ENCODE measurements at regions of chr14 and their contacts with region 1.

Region 1: GRCh38 chr14:22570132-22570949 is 18.7 kb downstream of the DAD1 start:
- DNase-seq: peak; percentile 94
- ATAC-seq: peak; percentile 85
- H3K4me3 Mint-ChIP-seq: peak overlapping the region; percentile 81
- H3K27ac Mint-ChIP-seq: peak overlapping the region; percentile 95
- H3K4me1 Mint-ChIP-seq: peaks cover 67% of the 10 kb centered on the region
- H3K27me3 Mint-ChIP-seq: no peaks in the 10 kb centered on the region

Region 2: DNA sequence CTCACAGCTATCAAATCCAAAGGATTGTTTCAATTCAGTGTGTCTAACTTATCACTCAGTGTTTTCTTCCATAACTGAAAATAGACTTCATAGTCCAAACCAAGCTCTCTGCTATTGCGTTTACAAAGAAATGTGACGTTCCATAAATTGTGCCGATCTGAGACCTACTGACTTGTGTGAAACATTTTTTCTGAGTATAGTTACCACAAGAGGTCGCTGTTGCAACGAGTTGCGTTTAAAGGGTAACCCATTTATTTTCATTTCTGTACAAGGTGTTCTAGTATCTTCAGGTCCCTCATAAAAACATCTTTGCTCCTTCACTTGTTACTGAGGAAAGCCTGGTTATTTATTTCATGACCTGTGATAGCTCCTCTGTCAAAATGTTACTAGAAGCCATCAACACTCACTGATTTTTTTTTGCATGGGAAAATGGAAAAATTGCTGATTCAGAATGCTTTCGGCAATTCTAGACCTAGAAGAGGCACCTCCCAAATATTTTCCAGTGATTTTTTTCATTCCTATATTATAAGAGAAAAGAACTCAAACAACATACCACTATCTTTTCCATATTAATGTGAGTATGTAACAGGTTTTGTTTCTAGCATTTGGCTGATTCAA is 835.8 kb before region 1 on chr14:
- CTCF ChIA-PET with region 1: interaction called, 14 read pairs
- DNase-seq: peak; percentile 59
- ATAC-seq: peak; percentile 53
- H3K4me3 Mint-ChIP-seq: peak overlapping the region; percentile 64
- H3K27ac Mint-ChIP-seq: peak overlapping the region; percentile 64
- H3K4me1 Mint-ChIP-seq: peaks cover 10% of the 10 kb centered on the region
- H3K27me3 Mint-ChIP-seq: peaks cover 60% of the 10 kb centered on the region

Region 3: GRCh38 chr14:21990116-21990515 is 580.2 kb before region 1 on chr14:
- CTCF ChIA-PET with region 1: interaction called, 16 read pairs
- DNase-seq: no peak
- ATAC-seq: peak; percentile 32
- H3K4me3 Mint-ChIP-seq: peak overlapping the region; percentile 58
- H3K27ac Mint-ChIP-seq: peak overlapping the region; percentile 65
- H3K4me1 Mint-ChIP-seq: peaks cover 34% of the 10 kb centered on the region
- H3K27me3 Mint-ChIP-seq: peaks cover 4% of the 10 kb centered on the region

Region 4: GRCh38 chr14:22412926-22413411 is 157.4 kb before region 1 on chr14:
- CTCF ChIA-PET with region 1: no interaction called
- DNase-seq: no peak
- ATAC-seq: no peak
- H3K4me3 Mint-ChIP-seq: no peak overlapping the region
- H3K27ac Mint-ChIP-seq: no peak overlapping the region
- H3K4me1 Mint-ChIP-seq: no peaks in the 10 kb centered on the region
- H3K27me3 Mint-ChIP-seq: no peaks in the 10 kb centered on the region

Region 5: GRCh38 chr14:22531451-22532344 is 38.6 kb before region 1 on chr14:
- CTCF ChIA-PET with region 1: interaction called, 17 read pairs
- DNase-seq: peak; percentile 62
- ATAC-seq: peak; percentile 50
- H3K4me3 Mint-ChIP-seq: peak overlapping the region; percentile 73
- H3K27ac Mint-ChIP-seq: peak overlapping the region; percentile 91
- H3K4me1 Mint-ChIP-seq: peaks cover 90% of the 10 kb centered on the region
- H3K27me3 Mint-ChIP-seq: no peaks in the 10 kb centered on the region

Region 6: GRCh38 chr14:22598099-22598899 is 28.0 kb after region 1 on chr14 and contains the start of gene ABHD4:
- CTCF ChIA-PET with region 1: interaction called, 31 read pairs
- DNase-seq: peak; percentile 82
- ATAC-seq: peak; percentile 91
- H3K4me3 Mint-ChIP-seq: peak within 1 kb of the TSS; percentile 92
- H3K27ac Mint-ChIP-seq: peak within 1 kb of the TSS; percentile 85
- H3K4me1 Mint-ChIP-seq: peaks cover 29% of the 10 kb centered on the region
- H3K27me3 Mint-ChIP-seq: peaks cover 3% of the 10 kb centered on the region
- total RNA-seq, gene ABHD4: 11.8 to 13.8 TPM

Region 7: GRCh38 chr14:22829661-22830442 is 259.5 kb after region 1 on chr14 and contains the start of gene MRPL52:
- CTCF ChIA-PET with region 1: interaction called, 60 read pairs
- DNase-seq: peak; percentile 95
- ATAC-seq: peak; percentile 96
- H3K4me3 Mint-ChIP-seq: peak within 1 kb of the TSS; percentile 92
- H3K27ac Mint-ChIP-seq: peak within 1 kb of the TSS; percentile 96
- H3K4me1 Mint-ChIP-seq: peaks cover 27% of the 10 kb centered on the region
- H3K27me3 Mint-ChIP-seq: peaks cover 3% of the 10 kb centered on the region
- total RNA-seq, gene MRPL52: 107 to 147 TPM

Region 8: GRCh38 chr14:22986508-22987054 is 416.2 kb after region 1 on chr14:
- CTCF ChIA-PET with region 1: interaction called, 45 read pairs
- DNase-seq: peak; percentile 93
- ATAC-seq: peak; percentile 62
- H3K4me3 Mint-ChIP-seq: no peak overlapping the region
- H3K27ac Mint-ChIP-seq: no peak overlapping the region
- H3K4me1 Mint-ChIP-seq: no peaks in the 10 kb centered on the region
- H3K27me3 Mint-ChIP-seq: no peaks in the 10 kb centered on the region

Measured in activated CD8-positive, alpha-beta memory T cell treated with anti-CD3 and anti-CD28 coated beads, Interleukin-2, amount 10 ng/mL, durations not matched to agents 7 days and 5 days (primary cell).